Activated naive CD8-positive, alpha-beta T cell treated with anti-CD3 and anti-CD28 coated beads, Interleukin-2, amount 10 ng/mL, durations not matched to agents 7 days and 5 days (primary cell): ENCODE measurements at regions of chr6 and their contacts with region 1.

Region 1: GRCh38 chr6:30061092-30061857 is at the start of gene POLR1H:
- DNase-seq: peak; percentile 85
- ATAC-seq: peak; percentile 88
- H3K4me3 Mint-ChIP-seq: peak within 1 kb of the TSS; percentile 98
- H3K27ac Mint-ChIP-seq: peak within 1 kb of the TSS; percentile 99
- H3K4me1 Mint-ChIP-seq: peaks cover 33% of the 10 kb centered on the region
- H3K27me3 Mint-ChIP-seq: no peaks in the 10 kb centered on the region
- total RNA-seq, gene POLR1H: 55.5 to 55.6 TPM

Region 2: DNA sequence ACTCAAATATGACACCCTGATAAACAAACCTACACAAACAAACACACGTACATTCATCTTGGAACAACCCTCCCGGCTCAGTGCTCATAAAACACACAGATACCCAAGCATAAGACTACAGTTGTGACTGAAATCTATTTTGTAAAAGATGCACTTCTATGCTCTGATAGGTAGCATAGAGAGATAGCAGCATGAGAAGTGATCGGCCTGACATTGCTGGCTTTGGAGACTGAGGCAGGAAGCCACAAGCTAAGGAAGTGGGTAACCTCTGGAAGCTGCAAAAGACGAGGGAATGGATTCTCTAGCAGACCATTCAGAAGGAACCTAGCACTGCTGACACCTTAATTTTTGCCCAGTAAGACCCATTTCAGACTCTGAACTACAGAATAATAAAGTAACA is 15.9 kb after region 1 on chr6:
- POLR2A ChIA-PET with region 1: interaction called, 12 read pairs
- DNase-seq: no peak
- ATAC-seq: peak; percentile 69
- H3K4me3 Mint-ChIP-seq: peak overlapping the region; percentile 58
- H3K27ac Mint-ChIP-seq: peak overlapping the region; percentile 32
- H3K4me1 Mint-ChIP-seq: peaks cover 26% of the 10 kb centered on the region
- H3K27me3 Mint-ChIP-seq: peaks cover 69% of the 10 kb centered on the region